ENCODE measurements at regions of chr15 and their contacts with region 1.

Region 1: DNA sequence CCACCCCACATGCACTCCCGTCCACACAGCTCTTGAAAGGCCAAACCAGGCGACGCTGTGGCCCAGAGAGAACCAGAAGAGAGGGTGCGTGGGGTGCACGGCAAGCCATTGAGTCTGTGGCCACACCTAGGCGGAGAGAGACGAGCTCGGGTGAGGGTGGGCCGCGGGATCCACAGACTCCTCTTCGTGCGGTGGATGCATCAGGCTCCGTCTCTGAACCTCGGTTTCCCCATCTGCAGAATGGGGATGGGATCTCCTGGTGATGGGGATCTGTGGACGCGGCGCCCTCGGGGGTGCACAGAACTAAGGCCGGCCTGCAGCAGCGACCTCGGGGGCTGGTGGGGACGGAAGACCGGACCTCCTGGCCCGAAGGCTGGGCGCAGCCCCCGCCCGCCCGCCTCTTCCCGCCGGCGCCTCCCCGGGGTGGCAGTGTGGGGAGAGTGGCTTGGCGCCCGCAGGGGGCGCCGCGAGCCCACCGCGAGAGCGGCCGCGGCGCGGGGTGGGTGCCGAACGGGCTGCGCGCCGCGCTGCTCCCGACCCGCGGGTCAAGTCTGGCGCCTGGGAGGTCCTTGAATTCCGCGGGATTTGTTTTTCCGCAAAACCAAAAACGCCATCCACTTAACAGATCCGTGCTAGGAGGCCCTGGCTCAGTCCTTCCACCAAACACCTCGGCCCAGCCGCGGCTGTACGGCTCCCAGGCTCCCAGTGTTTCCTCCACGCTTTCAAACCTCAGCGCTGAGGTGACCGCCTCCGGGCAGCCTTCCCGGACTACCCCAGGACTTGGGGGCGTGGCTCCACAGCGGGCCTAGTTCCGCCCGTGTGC is 13.2 kb upstream of the ADPGK start:
- DNase-seq: peak; percentile 42
- H3K4me3 Mint-ChIP-seq: peak overlapping the region; percentile 66
- H3K27ac Mint-ChIP-seq: no peak overlapping the region
- H3K4me1 Mint-ChIP-seq: peaks cover 13% of the 10 kb centered on the region
- H3K27me3 Mint-ChIP-seq: peaks cover 59% of the 10 kb centered on the region

Region 2: GRCh38 chr15:72690938-72691337 is 105.8 kb before region 1 on chr15:
- CTCF ChIA-PET with region 1: no interaction called
- DNase-seq: no peak
- H3K4me3 Mint-ChIP-seq: no peak overlapping the region
- H3K27ac Mint-ChIP-seq: no peak overlapping the region
- H3K4me1 Mint-ChIP-seq: peaks cover 15% of the 10 kb centered on the region
- H3K27me3 Mint-ChIP-seq: peaks cover 4% of the 10 kb centered on the region

Region 3: GRCh38 chr15:72732516-72732915 is 64.2 kb before region 1 on chr15:
- CTCF ChIA-PET with region 1: no interaction called
- DNase-seq: no peak
- H3K4me3 Mint-ChIP-seq: no peak overlapping the region
- H3K27ac Mint-ChIP-seq: no peak overlapping the region
- H3K4me1 Mint-ChIP-seq: peaks cover 10% of the 10 kb centered on the region
- H3K27me3 Mint-ChIP-seq: no peaks in the 10 kb centered on the region

Region 4: GRCh38 chr15:72783563-72784237 is 13.0 kb before region 1 on chr15 and contains the start of gene ADPGK:
- CTCF ChIA-PET with region 1: interaction called, 17 read pairs
- DNase-seq: peak; percentile 91
- H3K4me3 Mint-ChIP-seq: peak within 1 kb of the TSS; percentile 84
- H3K27ac Mint-ChIP-seq: peak within 1 kb of the TSS; percentile 97
- H3K4me1 Mint-ChIP-seq: peaks cover 51% of the 10 kb centered on the region
- H3K27me3 Mint-ChIP-seq: no peaks in the 10 kb centered on the region

Region 5: GRCh38 chr15:72835294-72835890 is 38.7 kb after region 1 on chr15:
- CTCF ChIA-PET with region 1: no interaction called
- DNase-seq: no peak
- H3K4me3 Mint-ChIP-seq: no peak overlapping the region
- H3K27ac Mint-ChIP-seq: no peak overlapping the region
- H3K4me1 Mint-ChIP-seq: no peaks in the 10 kb centered on the region
- H3K27me3 Mint-ChIP-seq: peaks cover 21% of the 10 kb centered on the region

Region 6: DNA sequence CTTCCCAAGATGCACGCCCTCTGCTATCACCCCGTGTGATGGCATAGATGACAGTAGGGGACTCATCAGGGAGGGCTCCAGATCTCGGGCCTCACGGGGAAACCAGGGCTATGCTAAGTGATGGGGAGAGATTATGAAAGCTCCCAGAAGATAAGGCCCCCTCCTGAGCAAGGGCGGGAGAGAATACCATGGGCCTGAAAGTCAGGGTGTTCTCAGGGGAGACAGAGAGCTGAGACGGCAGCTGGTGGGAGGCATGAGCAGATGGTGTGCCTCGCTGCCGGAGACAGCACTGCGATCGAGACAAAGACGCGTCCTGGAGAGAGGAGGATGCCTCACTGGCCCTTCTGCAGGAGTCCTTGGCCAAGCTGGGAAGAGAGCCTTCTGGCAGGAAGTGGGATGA is 93.3 kb after region 1 on chr15:
- CTCF ChIA-PET with region 1: no interaction called
- DNase-seq: no peak
- H3K4me3 Mint-ChIP-seq: no peak overlapping the region
- H3K27ac Mint-ChIP-seq: no peak overlapping the region
- H3K4me1 Mint-ChIP-seq: no peaks in the 10 kb centered on the region
- H3K27me3 Mint-ChIP-seq: peaks cover 17% of the 10 kb centered on the region